HCT116 (cell line): ENCODE measurements at regions of chr7 and their contacts with region 1.

Region 1: GRCh38 chr7:140541513-140542227 is 62.4 kb upstream of the MKRN1 start:
- DNase-seq: peak; percentile 75
- ATAC-seq: peak; percentile 89
- H3K4me3 ChIP-seq: peak overlapping the region; percentile 35 to 53
- H3K27ac ChIP-seq: peak overlapping the region; percentile 54
- H3K4me1 ChIP-seq: peaks cover 23 to 25% of the 10 kb centered on the region in 2 experiments
- H3K27me3 ChIP-seq: no peaks in the 10 kb centered on the region
- CTCF ChIP-seq: no peak
- POLR2A ChIP-seq: no peak
- RAD21 ChIP-seq: peak; percentile 27; the same call in 1 of the 2 replicates

Region 2: DNA sequence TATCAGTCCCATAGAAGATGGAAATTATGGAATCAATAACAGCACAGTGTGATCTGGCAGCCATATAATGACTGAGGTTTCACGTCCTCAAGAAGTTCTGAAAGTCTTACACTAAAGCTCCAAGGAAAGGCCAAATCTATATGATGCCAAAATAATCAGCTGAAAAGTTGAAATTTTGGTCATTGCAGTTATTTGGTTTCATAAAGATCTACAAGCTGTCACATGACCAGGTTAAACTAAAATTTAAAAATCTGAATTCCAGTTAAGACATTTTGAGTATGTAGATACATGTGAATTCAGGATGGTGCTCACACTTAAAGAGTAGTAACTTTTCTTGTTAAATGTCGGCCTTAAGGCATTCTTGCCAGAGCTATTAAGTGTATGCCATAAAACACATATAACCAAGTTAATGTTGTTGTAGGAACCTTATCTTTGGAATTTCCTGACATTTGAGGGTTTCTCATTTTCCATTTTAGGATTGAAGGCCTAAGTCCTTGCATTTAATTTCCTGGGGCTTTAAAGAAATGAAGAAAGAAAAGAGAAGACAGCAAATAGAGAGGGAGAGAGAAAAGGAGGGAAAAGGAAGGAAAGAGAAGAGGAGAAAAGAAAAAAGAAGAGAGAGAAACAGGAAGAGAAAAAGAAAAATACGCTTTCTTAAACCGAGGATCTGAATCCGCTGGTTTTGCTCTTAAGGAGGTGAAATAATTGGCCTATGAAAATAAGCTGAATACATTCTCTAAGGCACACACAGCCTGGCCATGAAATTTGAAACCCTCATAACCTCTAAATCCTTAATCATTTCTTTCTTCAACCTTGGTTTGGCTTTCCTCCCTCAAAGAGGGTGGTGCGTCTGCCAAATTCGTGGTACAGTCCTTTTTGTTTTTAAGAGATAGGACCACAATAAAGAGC is 55.1 kb after region 1 on chr7:
- CTCF ChIA-PET with region 1: no interaction called
- POLR2A ChIA-PET with region 1: no interaction called
- RAD21 ChIA-PET with region 1: no interaction called
- intact Hi-C with region 1: loop called (anchors 5 kb)
- DNase-seq: no peak
- ATAC-seq: no peak
- H3K4me3 ChIP-seq: no peak overlapping the region
- H3K27ac ChIP-seq: no peak overlapping the region
- H3K4me1 ChIP-seq: no peaks in the 10 kb centered on the region
- H3K27me3 ChIP-seq: no peaks in the 10 kb centered on the region
- CTCF ChIP-seq: no peak
- POLR2A ChIP-seq: no peak
- RAD21 ChIP-seq: no peak